Ascending aorta (tissue), 2 donors: ENCODE measurements at regions of chr6 and their contacts with region 1.

Region 1: DNA sequence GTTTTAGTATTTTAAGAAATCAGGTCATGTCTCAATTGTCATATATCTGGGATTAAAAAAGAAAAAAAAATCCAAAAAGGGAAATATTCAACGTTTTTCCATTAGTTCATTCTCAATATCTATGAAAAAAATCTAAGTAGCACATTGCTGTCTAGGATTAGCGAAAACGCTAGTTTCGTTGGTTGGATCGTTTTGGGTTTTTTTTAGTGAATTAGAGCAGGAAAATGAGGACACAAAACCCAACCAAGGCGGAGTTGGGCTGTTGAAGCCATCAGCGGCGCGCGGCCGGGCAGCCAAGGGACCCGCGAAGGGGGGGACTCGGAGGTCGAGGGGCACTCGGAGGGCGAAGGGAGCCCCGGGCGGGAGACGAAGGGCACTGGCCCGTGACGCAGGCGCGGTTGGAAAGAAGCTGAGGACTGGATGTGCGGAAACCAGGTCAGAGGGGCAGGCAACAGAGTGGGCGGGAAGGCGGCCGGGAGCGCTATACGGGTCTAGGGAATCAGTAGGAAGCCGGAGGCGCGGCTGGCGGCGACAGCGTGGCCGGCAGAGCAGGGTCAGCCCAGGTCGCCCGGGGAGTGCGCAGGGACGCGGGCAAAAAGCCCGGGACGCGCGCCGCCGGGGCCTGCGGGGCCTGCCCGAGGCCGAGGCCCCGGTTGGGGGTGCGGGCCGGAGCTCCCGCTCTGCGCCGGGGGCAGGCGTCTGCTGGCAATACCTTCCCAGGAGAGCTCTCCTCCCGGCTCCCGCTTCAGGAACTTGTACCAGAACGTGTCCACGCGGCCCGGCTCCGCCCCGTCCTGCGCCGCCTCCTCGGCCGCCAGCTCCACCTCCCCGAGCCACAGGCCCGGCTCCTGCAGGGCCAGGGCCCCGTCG is 599 bp downstream of the EPM2A start:
- DNase-seq: peak; percentile 65 to 94
- H3K4me3 ChIP-seq: peak overlapping the region; percentile 59 to 82
- H3K27ac ChIP-seq: peak overlapping the region; percentile 96 to 97
- H3K4me1 ChIP-seq: peaks cover 0 to 8% of the 10 kb centered on the region in 2 donors
- H3K27me3 ChIP-seq: no peaks in the 10 kb centered on the region
- CTCF ChIP-seq: no peak

Region 2: GRCh38 chr6:145798530-145798929 is 63.8 kb after region 1 on chr6:
- intact Hi-C with region 1: loop called (anchors 5 kb)
- DNase-seq: no peak
- H3K4me3 ChIP-seq: peak overlapping the region in 1 of 2 donors; percentile 9
- H3K27ac ChIP-seq: peak overlapping the region; percentile 35 to 37
- H3K4me1 ChIP-seq: peaks cover 0 to 8% of the 10 kb centered on the region in 2 donors
- H3K27me3 ChIP-seq: no peaks in the 10 kb centered on the region
- CTCF ChIP-seq: no peak

Region 3: DNA sequence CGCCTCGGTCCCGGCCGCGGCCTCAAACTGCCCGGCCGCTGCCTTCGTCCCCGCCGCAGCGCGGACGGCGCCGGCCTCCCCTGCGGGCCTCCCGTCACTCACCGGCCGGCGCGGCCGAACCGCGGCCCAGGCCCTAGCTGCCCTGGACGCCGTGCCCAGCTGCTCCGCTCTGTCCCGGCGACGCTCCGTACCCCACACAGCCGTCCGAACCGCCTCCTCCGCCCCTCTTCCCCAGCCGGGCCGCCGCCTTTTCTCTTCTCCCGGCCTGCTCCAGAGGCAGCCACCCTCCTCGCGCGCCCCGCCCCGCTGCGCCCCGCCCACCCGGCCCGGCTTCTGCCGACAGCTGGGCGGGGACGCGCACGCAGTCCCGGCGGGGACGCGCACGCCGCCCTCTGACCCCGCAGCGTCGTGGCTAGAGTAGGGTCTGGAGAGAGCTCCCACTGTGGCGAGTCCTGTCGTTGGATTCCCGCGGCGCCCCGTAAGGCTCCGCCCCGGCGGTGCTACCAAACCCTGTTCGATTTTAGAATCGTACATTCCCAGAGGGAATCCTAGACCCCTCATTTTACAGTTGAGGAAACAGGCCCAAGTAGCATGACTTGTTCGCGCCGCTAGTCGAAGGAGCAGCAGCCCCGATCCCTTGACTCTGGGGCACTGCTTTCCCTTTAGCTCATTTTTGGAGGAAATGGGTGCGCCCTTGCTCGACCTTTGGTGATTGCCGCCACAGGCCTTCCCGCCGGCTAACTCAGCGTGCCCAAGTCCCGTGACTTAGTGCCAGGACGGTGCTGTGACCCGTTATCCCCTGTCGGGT is 80.0 kb after region 1 on chr6 and contains the start of gene FBXO30:
- intact Hi-C with region 1: loop called (anchors 1 kb)
- DNase-seq: peak; percentile 53 to 96
- H3K4me3 ChIP-seq: peak within 1 kb of the TSS; percentile 77 to 95
- H3K27ac ChIP-seq: peak within 1 kb of the TSS; percentile 92 to 94
- H3K4me1 ChIP-seq: peaks cover 0 to 32% of the 10 kb centered on the region in 2 donors
- H3K27me3 ChIP-seq: no peaks in the 10 kb centered on the region
- CTCF ChIP-seq: peak in 1 of 3 experiments; percentile 42
- total RNA-seq, gene FBXO30: 1.2 TPM

Region 4: DNA sequence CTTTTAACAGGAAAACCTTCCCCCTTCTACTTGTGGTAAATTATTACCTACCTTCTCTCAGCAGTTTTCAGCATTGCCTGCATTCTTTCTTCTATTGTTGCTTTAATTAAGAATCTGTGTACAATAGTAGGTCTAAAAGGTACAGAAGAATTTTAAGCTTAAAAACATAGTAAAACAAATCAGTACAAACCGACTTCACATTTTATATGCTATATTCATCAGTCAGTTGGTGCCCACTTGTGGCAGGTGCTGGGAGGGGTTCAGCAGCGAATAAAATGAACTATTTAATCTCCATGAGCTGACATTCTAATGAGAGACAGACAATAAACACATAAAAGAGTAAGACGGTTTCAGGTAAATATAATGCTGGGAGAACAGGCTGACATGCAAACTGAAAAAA is 153.2 kb after region 1 on chr6:
- intact Hi-C with region 1: loop called (anchors 5 kb)
- DNase-seq: no peak
- H3K4me3 ChIP-seq: no peak overlapping the region
- H3K27ac ChIP-seq: no peak overlapping the region
- H3K4me1 ChIP-seq: no peaks in the 10 kb centered on the region
- H3K27me3 ChIP-seq: no peaks in the 10 kb centered on the region
- CTCF ChIP-seq: peak in 2 of 3 experiments; percentile 56 to 57

Region 5: DNA sequence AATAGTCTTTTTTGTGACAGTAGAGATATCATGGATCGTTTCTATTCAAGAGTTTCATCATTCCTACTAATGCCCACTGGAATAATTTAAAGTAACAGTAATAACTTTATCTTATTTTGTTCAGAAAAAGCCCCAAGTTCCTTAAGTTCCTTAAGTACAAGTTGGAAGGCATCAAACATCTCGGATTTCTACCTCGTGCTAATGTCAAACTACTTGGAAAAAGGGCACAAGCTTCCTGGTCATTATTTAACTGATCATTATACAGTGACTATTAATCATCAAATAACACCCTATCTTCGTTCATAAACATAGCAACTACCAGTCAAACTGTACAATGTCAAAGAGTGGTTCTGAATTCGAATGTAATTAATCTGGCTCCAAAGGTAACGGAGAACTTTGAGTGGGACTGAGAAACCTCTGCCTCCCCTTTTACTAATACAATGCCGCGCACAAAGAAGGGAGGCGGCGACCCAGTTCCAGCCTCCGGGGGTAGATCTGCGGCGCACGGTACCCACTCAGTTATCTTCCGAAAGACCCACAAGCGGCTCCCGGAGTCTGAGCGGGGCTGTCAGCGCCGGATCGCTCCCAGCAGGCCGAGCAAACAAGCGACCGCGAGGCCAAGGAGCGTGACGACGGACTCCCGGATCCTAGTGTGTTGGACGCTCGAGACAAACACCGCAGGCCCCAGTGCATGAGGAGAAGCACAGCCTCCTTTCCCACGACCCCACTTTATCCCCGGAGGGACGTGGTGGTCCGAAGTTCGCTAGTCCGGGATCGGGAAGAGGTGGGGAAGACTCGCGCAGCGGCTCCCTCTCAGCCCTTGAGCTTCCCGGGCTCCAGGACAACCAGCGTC is 228.7 kb after region 1 on chr6:
- intact Hi-C with region 1: loop called (anchors 2 kb)
- DNase-seq: peak in 1 of 2 donors; percentile 69
- H3K4me3 ChIP-seq: peak overlapping the region; percentile 82 to 92
- H3K27ac ChIP-seq: peak overlapping the region; percentile 84 to 86
- H3K4me1 ChIP-seq: peaks cover 0 to 16% of the 10 kb centered on the region in 2 donors
- H3K27me3 ChIP-seq: no peaks in the 10 kb centered on the region
- CTCF ChIP-seq: no peak

Region 6: DNA sequence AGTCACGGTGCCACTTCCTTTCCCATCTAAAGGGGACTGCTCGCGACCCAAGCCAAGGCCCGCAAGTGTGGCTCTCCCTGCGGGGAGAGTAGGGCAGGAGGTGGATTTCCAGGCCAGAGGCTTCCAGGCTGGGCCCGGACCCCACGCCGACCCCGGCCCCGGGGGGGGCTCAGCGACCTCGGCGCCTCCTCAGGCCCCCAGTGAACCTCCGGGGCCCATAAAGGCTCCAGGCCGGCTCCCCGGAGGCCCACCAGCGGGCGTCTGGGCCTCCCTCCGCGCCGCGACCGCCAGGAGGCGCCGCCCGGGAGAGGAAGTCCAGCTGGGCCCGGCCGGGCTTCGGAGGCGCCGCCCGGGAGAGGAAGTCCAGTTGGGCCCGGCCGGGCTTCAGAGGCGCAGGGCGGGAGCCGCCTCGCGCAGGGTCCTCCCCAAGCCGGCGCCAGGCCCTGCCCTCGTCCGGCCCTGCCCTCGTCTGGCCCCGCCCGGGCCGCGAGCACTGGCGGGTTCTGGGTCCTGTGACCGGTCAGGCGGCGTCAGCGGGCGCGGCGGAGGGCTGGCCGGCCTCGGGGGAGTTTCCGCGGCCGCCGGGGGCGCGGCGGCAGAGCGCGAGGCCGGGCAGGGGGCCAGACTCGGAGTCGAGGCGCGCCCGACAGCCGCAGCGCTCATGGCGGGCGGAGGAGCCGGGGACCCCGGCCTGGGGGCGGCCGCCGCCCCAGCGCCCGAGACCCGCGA is 808.7 kb after region 1 on chr6 and contains the start of gene RAB32:
- intact Hi-C with region 1: loop called (anchors 2 kb)
- DNase-seq: peak; percentile 82 to 97
- H3K4me3 ChIP-seq: peak within 1 kb of the TSS; percentile 91 to 94
- H3K27ac ChIP-seq: peak within 1 kb of the TSS; percentile 97 to 99
- H3K4me1 ChIP-seq: peaks cover 4 to 27% of the 10 kb centered on the region in 2 donors
- H3K27me3 ChIP-seq: no peaks in the 10 kb centered on the region
- CTCF ChIP-seq: peak; percentile 79 to 85 (median 79)
- total RNA-seq, gene RAB32: 89.2 TPM